Head of caudate nucleus (tissue), 42 donors: ENCODE measurements at regions of chr19 and their contacts with region 1.

Region 1: DNA sequence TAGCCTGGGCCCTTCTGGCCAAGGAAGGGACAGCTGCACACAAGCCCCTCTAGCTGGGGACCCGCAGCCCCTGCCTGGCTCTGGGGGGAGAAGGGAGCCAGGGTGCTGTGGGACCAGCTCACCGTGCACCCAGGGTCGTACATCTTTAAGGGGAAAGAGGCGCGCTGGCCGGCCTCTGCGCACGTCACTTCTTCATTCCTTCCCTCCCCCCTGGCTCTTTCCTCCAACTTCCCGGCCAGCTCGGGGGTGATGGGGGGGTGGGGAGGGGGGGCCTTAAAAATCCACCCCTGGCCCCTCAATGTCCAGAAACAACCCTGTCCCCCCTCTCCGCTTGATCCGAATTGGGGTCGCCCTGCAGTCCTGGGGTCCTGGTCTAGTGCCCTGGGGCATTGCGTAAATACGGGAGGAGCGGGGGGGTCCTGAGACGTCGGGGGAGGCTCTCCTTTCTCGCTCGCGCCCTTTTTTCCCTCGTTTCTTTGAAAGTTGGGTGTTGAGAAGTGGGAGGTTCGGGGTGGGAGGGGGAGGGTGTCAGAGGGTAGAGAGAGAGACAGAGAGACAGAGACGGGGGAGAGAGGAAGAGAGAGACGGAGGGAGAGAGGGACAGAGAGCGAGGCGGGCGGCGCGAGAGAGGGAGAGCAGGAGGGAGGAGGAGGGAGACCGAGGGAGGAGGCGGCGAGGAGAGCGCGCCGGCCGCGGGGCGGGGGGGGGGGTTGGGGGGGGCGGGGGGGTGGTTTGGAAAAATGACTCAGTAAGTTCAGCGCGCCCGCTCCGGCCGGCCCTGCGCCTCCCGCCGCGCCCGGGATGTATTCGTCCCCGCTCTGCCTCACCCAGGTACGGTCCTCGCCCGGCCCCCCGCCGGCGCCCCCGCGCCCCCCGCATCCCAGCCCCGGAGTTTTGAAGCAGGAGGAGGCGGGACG is at the start of gene NFIC:
- DNase-seq: peak in 40 of 42 donors; percentile 47 to 87 (median 68)

Region 2: GRCh38 chr19:3403489-3404323 is 37.6 kb after region 1 on chr19:
- intact Hi-C with region 1: loop called (anchors 5 kb)
- DNase-seq: peak; percentile 65 to 93 (median 81)